ENCODE measurements at regions of chr7 and their contacts with region 1.

Region 1: DNA sequence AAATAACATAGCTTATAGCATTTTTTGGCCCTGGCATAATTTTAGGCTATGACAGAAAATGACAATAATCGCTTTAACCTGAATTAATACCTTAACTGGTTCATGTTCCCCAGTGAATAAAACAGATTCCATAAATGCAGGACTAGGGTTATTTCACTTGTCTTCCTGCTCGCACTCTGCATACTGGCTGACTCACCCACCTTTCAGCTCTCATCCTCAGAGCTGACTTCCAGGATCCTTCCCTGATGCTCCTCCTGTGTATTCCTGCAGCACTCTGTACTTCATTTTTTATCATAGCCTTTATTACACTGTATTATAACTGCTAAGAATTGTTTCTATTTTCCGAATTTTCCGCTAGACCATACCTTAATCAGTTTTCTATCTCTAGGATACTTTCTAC is 123.7 kb downstream of the AVL9 start:
- DNase-seq: no peak
- H3K4me3 ChIP-seq: no peak overlapping the region
- H3K27ac ChIP-seq: no peak overlapping the region
- H3K4me1 ChIP-seq: no peaks in the 10 kb centered on the region
- H3K27me3 ChIP-seq: no peaks in the 10 kb centered on the region
- CTCF ChIP-seq: no peak
- POLR2A ChIP-seq: no peak

Region 2: GRCh38 chr7:32561613-32562012 is 57.4 kb before region 1 on chr7:
- CTCF ChIA-PET with region 1: no interaction called
- POLR2A ChIA-PET with region 1: no interaction called
- dilution Hi-C with region 1: no loop called
- intact Hi-C with region 1: loop called (anchors 2 kb)
- DNase-seq: no peak
- H3K4me3 ChIP-seq: no peak overlapping the region
- H3K27ac ChIP-seq: no peak overlapping the region
- H3K4me1 ChIP-seq: peaks cover 6% of the 10 kb centered on the region
- H3K27me3 ChIP-seq: no peaks in the 10 kb centered on the region
- CTCF ChIP-seq: no peak
- POLR2A ChIP-seq: no peak

Measured in endothelial cell of umbilical vein (primary cell).